Activated CD4-positive, alpha-beta memory T cell treated with anti-CD3 and anti-CD28 coated beads for 36 hours (primary cell): ENCODE measurements at regions of chr11 and their contacts with region 1.

Region 1: DNA sequence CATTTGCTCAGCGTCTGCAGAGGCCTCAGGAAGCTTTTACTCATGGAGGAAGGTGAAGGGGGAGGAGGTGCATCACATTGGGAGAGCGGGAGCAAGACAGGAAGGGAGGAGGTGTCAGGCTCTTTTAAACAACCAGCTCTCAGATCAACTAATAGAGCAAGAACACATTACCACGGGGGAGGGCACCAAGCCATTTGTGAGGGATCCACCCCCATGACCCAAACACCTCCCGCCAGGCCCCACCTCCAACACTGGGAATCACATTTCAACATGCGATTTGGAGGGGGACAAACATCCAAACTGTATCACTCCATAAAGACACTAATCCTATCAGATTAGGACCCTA is 18.9 kb upstream of the THY1 start:
- DNase-seq: no peak
- H3K4me3 Mint-ChIP-seq: no peak overlapping the region
- H3K27ac Mint-ChIP-seq: no peak overlapping the region
- H3K4me1 Mint-ChIP-seq: peaks cover 12% of the 10 kb centered on the region
- H3K27me3 Mint-ChIP-seq: peaks cover 31% of the 10 kb centered on the region

Region 2: GRCh38 chr11:119363851-119364590 is 77.8 kb before region 1 on chr11:
- CTCF ChIA-PET with region 1: no interaction called
- POLR2A ChIA-PET with region 1: no interaction called
- intact Hi-C with region 1: no loop called
- DNase-seq: peak; percentile 64
- H3K4me3 Mint-ChIP-seq: no peak overlapping the region
- H3K27ac Mint-ChIP-seq: no peak overlapping the region
- H3K4me1 Mint-ChIP-seq: peaks cover 34% of the 10 kb centered on the region
- H3K27me3 Mint-ChIP-seq: peaks cover 48% of the 10 kb centered on the region

Region 3: DNA sequence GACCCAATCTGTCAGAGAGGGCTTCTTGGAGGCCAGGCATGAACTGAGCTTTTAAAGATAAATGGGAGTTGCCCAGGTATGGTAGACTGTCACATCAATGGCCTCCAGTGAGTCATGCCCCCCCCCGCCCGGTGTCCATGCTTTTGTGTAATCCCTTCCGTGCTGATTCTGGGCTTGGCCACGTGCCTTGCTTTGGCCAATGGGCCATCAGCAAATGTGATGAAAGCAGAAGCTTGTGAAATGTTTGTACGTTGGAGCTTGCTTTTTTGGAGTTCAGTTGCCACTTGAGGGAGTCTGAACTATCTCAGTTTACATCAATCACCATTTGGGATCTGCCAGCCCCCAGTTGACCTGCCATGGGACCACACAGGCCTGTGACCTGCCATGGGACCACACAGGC is 14.6 kb before region 1 on chr11:
- CTCF ChIA-PET with region 1: no interaction called
- POLR2A ChIA-PET with region 1: interaction called, 3 read pairs
- intact Hi-C with region 1: loop called (anchors 2 kb)
- DNase-seq: peak; percentile 26
- H3K4me3 Mint-ChIP-seq: no peak overlapping the region
- H3K27ac Mint-ChIP-seq: no peak overlapping the region
- H3K4me1 Mint-ChIP-seq: peaks cover 23% of the 10 kb centered on the region
- H3K27me3 Mint-ChIP-seq: peaks cover 42% of the 10 kb centered on the region